ENCODE measurements at regions of chr17 and their contacts with region 1.

Region 1: GRCh38 chr17:75632863-75633485 is at the start of gene SMIM5:
- DNase-seq: peak; percentile 36
- H3K4me3 ChIP-seq: no peak within 1 kb of the TSS
- CTCF ChIP-seq: peak; percentile 91

Region 2: GRCh38 chr17:75218131-75218530 is 414.8 kb before region 1 on chr17:
- CTCF ChIA-PET with region 1: no interaction called
- POLR2A ChIA-PET with region 1: no interaction called
- DNase-seq: no peak
- H3K4me3 ChIP-seq: no peak overlapping the region
- CTCF ChIP-seq: no peak

Region 3: DNA sequence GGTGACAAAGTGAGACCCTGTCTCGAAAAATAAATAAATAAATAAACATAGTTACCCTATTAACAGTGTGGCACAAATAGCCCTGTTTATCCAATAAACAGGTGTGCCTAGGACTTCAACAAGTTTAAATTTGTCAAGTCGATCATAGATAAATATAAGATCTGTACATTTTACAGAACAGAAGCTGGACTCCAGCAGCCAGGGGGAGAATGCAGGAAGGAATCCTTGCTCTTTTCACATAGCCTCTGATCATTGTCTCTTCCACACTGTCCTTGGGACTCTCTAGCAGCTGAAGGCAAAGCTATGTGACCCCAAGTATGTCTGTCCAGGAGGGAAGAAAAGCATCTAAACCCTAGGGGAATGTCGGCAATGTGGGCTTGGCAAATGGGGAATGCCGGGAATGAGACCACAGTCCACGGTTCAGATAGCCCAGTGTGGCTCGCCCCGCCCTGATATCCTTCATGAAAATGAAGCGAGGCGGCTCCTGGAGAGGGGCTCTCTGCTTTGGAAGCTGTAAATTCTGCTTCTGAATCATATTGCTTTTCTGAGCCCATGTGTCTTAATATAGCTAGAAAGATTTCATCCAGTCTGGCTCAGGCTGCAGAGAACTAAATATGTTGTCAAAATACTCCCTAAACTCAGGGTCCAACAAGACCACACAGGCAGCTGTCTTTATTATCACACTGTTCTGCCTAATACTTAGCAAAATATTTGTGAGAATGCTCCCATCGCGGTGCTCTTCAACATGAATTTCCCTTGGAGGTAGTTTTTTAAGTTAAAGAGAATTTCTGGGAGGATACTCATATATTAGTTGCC is 202.6 kb before region 1 on chr17:
- CTCF ChIA-PET with region 1: interaction called, 26 read pairs
- POLR2A ChIA-PET with region 1: interaction called, 3 read pairs
- DNase-seq: peak; percentile 82
- H3K4me3 ChIP-seq: no peak overlapping the region; the same call in 1 of the 2 replicates
- CTCF ChIP-seq: no peak

Region 4: GRCh38 chr17:75463603-75464002 is 169.4 kb before region 1 on chr17:
- CTCF ChIA-PET with region 1: no interaction called
- POLR2A ChIA-PET with region 1: no interaction called
- DNase-seq: no peak
- H3K4me3 ChIP-seq: no peak overlapping the region
- CTCF ChIP-seq: no peak

Region 5: DNA sequence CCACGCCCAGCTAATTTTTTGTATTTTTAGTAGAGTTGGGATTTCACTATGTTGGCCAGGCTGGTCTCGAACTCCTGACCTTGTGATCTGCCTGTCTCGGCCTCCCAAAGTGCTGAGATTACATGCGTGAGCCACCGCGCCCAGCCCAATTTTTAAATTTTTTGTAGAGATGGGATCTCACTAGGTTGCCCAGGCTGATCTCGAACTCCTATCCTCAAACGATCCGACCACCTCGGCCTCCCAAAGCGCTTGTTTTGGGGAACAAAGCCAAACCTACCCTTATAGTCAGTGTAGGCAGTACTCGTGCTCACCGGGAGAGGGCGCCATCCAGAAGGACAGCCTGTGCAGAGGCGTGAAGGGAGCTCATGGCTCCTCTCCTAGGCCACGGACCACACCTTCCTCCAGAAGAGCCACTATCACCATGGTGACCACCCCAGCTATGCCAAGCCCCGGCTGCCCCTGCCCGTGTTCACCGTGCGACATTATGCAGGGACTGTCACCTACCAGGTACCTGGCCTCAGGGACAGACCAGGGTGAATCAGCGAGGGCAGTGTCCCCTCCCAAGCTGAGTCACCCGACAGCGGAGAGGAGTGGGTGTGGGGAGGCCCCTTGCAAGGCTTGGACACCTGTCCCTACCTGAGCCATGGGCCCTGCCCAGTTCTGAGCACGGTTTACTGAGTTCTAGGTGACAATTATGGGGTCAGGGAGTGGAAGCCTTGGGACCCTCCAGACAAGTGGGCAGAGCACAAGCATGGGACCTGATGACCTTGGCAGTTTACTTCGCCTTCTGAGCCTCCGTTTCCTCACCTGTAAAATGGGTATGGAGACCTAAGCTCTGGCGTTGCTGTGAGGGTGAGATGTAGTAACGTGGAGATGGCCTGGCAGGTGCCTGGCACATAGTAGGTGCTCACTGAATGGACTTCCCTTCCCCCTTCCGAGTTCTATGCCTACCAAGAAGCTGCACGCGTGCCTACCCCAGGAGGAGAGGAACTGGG is 31.6 kb before region 1 on chr17:
- CTCF ChIA-PET with region 1: interaction called, 50 read pairs
- POLR2A ChIA-PET with region 1: no interaction called
- DNase-seq: no peak
- H3K4me3 ChIP-seq: no peak overlapping the region
- CTCF ChIP-seq: peak; percentile 66

Region 6: GRCh38 chr17:75673487-75673886 is 40.5 kb after region 1 on chr17:
- CTCF ChIA-PET with region 1: interaction called, 47 read pairs
- POLR2A ChIA-PET with region 1: no interaction called
- DNase-seq: no peak
- H3K4me3 ChIP-seq: no peak overlapping the region
- CTCF ChIP-seq: no peak

Region 7: GRCh38 chr17:75693500-75694481 is 60.8 kb after region 1 on chr17:
- CTCF ChIA-PET with region 1: interaction called, 18 read pairs
- POLR2A ChIA-PET with region 1: no interaction called
- DNase-seq: peak; percentile 84
- H3K4me3 ChIP-seq: no peak overlapping the region; the same call in 1 of the 2 replicates
- CTCF ChIP-seq: peak; percentile 41

Region 8: DNA sequence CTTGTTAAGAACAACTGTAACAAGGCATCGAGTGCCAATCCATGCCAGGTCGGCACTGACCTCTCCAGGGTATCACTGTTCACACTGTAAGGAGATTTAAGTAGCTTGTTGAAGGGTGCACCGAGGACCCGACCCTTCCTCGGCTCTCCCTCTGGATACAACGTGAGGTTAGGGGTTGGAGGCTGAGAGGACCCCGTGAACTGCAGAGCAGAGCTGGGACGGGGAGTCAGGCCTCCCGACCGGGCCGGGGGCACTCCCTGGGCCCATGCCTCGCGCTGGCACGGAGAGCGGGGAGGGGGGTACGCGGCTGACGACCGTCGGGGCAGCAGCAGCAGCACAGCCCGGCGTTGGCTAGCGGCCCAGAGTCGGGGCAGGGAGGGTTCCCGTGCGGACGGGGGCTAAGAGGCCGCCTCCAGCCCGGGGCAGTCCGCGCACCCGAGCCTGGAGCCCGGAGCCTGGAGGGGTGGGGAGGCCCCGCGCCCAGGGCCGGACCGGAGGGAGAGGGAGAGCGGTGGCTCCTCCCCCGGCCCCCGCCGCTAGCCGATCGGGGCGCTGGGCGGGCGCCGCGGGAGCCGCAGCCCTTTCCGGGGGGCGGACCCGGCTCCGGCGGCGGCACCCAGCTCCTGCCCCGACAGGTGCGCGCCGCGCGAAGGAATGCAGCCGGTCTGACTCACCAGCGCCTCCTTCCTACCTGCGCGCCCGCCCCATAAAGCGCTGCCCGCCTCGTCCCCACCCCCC is 87.9 kb after region 1 on chr17 and contains the start of gene ITGB4:
- CTCF ChIA-PET with region 1: interaction called, 19 read pairs
- POLR2A ChIA-PET with region 1: no interaction called
- DNase-seq: no peak
- H3K4me3 ChIP-seq: peak within 1 kb of the TSS; percentile 23; the same call in 1 of the 2 replicates
- CTCF ChIP-seq: no peak

Region 9: GRCh38 chr17:75855310-75856081 is 222.5 kb after region 1 on chr17 and contains the start of gene WBP2:
- CTCF ChIA-PET with region 1: no interaction called
- POLR2A ChIA-PET with region 1: no interaction called
- DNase-seq: peak; percentile 99
- H3K4me3 ChIP-seq: peak within 1 kb of the TSS; percentile 97
- CTCF ChIP-seq: peak; percentile 57

Measured in AG04449 (cell line).